Cardiac septum (tissue), 1 donor: ENCODE measurements at regions of chr9 and their contacts with region 1.

Region 1: GRCh38 chr9:4297151-4297785 is 2.6 kb downstream of the GLIS3 start:
- DNase-seq: peak; percentile 84

Region 2: DNA sequence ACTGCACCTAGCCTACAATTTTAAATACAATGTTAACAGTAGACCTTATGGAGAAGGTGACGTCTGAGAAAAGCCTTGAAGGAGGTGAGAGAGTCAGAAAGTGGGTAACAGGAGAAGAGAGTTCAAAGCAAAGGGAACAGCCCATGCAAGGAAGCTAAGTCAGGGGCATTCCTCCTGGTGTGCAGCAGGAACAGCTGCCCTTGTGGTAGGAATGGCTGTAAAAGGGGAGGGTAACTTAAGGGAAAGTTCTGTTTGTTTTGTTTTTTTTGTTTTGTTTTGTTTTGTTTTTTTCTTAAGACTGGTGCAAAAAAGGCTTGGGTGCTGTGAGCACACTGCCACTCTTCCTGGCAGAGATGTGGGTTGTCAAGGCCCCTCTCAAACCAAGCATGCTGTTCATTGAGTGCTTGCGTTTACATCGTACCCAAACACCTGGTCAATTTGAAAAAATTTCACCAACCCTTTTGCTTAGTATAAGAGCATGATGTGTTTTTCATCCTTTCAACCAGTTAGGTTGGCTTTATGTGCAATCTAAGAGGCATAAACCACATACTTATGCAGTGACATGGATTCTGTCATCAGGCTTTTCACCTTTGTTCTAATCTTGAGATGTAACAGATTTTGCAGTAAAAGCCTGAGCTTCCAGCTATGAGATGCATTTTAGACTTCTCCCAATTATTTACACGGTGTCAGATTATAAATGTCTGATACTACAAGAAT is 277.1 kb before region 1 on chr9:
- intact Hi-C with region 1: no loop called
- DNase-seq: no peak

Region 3: GRCh38 chr9:4086119-4087090 is 210.9 kb before region 1 on chr9:
- intact Hi-C with region 1: loop called (anchors 10 kb)
- DNase-seq: no peak